ENCODE measurements at regions of chr21 and their contacts with region 1.

Region 1: DNA sequence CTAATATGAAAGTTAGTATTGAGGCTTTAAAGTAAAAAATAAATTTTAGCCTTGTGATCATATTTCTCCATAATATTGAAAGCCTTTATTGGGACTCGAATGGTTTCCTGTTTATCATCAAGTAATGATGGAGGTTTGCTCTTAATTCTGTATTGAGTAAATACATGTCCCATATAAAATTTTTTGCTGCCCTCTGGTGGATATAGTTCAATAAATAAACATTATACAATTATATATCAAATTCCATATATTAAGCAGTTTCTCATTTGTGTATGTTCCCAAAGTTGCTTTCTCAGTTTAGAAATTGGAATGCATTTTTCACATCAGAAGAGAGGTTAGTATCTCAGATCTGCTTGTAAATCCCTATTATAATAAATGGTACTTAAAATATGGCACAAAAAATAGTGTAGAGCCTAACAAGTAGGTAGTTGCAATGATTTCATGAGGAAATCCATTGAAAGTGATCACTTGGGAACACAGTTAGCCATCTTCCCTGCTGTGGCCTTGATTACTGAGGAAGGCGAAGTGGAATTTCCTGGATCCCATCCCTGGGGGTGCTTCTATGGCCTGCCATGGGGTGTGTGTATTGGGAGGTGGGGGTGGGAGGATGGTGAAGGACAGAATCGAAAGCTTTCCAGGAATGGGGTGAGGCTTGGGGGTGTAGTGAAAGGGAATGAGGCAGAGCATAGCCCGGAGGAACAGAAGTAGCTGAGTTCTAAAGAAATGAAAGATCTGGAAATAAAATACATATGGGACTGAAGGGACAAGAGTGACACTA is 84.1 kb upstream of the C21orf91 start:
- DNase-seq: no peak
- ATAC-seq: no peak

Region 2: DNA sequence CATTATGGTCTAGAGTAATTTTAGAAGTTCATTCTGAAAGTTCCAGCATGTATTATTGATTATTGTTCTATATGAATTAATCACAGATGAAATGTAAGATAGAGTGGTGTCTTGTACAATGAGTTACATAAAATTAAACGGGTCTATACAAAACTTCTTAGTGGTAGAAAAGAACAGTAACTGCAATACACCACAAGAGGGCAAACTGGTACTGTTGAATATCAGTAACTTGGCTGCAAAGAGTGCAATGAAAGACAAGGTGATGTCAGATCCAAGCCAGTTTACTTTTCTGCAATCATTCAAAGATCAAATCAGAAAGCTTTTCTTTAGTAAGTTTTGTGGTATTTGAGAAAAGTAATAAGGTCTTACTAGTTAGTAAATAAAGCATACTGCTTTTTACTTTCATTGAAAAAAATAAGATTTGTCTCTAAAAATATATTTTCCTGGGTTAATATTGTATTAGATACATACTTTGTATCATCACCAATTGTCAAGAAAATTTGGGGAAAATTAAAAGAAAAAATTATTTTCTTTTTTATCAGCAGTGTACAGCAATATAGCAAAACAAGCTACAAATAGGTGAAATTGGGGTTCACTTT is 224.1 kb before region 1 on chr21:
- intact Hi-C with region 1: loop called (anchors 5 kb)
- DNase-seq: no peak
- ATAC-seq: peak; percentile 86

Region 3: GRCh38 chr21:17819114-17819876 is 83.9 kb before region 1 on chr21 and contains the start of gene C21orf91:
- intact Hi-C with region 1: loop called (anchors 10 kb)
- DNase-seq: peak; percentile 94
- ATAC-seq: peak; percentile 99
- total RNA-seq, gene C21orf91: 6.3 TPM

Measured in Right ventricle myocardium superior (tissue), 1 donor.